ENCODE measurements at regions of chr20 and their contacts with region 1.

Region 1: GRCh38 chr20:36573103-36573794 is at the start of gene TGIF2:
- DNase-seq: peak; percentile 78
- H3K4me3 Mint-ChIP-seq: peak within 1 kb of the TSS; percentile 97
- H3K27ac Mint-ChIP-seq: peak within 1 kb of the TSS; percentile 99
- H3K4me1 Mint-ChIP-seq: peaks cover 34% of the 10 kb centered on the region
- H3K27me3 Mint-ChIP-seq: no peaks in the 10 kb centered on the region
- total RNA-seq, gene TGIF2: 44.3 and 50.6 TPM in 2 replicates

Region 2: GRCh38 chr20:36519944-36520343 is 53.3 kb before region 1 on chr20:
- intact Hi-C with region 1: loop called (anchors 2 kb)
- DNase-seq: no peak
- H3K4me3 Mint-ChIP-seq: no peak overlapping the region
- H3K27ac Mint-ChIP-seq: peak overlapping the region; percentile 87
- H3K4me1 Mint-ChIP-seq: peaks cover 20% of the 10 kb centered on the region
- H3K27me3 Mint-ChIP-seq: no peaks in the 10 kb centered on the region

Region 3: DNA sequence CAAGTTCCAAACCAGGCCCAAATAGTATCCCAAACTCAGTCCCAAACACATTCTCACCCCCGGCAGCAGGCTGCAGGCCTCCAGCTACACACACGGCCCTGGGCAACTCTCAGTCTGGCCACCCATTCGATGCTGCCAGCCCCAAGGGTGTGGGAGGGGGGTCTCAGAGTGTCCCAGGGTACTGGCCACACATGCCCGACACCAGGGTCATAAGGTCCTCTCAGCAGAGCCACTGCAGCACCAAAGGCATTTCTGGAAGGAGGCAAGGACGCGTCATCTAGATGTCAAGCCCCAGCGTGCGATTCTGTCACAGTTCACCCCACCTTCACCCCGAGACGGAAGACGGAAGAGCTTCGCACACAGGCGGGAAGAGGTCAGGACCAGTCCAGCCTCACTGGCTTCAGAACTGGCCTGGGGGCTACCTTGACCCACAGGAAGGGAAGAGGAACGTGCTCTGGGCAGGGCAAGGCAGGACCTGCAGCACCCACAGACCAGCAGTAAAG is 22.4 kb before region 1 on chr20:
- intact Hi-C with region 1: loop called (anchors 2 kb)
- DNase-seq: no peak
- H3K4me3 Mint-ChIP-seq: no peak overlapping the region
- H3K27ac Mint-ChIP-seq: no peak overlapping the region
- H3K4me1 Mint-ChIP-seq: peaks cover 2% of the 10 kb centered on the region
- H3K27me3 Mint-ChIP-seq: no peaks in the 10 kb centered on the region

Region 4: GRCh38 chr20:36591854-36592641 is 18.8 kb after region 1 on chr20:
- intact Hi-C with region 1: loop called (anchors 1 kb)
- DNase-seq: peak; percentile 44
- H3K4me3 Mint-ChIP-seq: peak overlapping the region; percentile 48
- H3K27ac Mint-ChIP-seq: peak overlapping the region; percentile 62
- H3K4me1 Mint-ChIP-seq: peaks cover 54% of the 10 kb centered on the region
- H3K27me3 Mint-ChIP-seq: no peaks in the 10 kb centered on the region

Region 5: DNA sequence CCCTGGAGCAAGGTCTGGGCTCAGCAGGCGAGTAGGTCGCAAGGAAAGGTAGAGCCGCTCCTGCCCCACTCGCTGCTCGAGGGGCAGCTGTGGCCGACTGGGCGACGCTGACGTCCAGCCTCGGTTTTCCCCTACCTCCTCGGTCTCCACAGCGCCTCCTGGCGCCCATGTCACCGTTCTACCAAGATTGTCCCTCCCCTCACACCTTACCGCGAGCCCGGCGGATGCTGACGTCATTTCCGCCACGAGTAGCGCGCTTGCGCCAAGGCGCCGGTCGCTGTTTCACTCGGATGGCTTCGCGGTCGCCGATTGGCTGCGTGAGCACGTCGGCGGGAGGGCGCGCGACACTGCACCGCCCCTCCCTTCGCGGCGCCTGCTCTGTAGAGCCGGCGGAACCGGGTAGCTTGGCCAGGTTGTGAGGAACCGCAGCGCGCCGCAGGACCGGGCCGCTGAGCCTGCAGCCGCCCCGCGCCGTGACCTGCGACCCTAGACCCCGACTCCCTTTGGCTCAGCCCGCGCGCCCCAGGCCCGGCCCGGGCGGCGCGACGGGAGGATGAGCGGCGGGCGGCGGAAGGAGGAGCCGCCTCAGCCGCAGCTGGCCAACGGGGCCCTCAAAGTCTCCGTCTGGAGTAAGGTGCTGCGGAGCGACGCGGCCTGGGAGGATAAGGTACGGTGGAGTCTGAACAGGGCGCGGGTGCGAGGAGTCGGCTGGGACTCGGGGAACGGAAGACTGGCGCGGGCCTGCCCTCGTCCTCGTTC is 32.3 kb after region 1 on chr20 and contains the start of gene RAB5IF:
- intact Hi-C with region 1: loop called (anchors 1 kb)
- DNase-seq: peak; percentile 100
- H3K4me3 Mint-ChIP-seq: peak within 1 kb of the TSS; percentile 99
- H3K27ac Mint-ChIP-seq: peak within 1 kb of the TSS; percentile 95
- H3K4me1 Mint-ChIP-seq: peaks cover 21% of the 10 kb centered on the region
- H3K27me3 Mint-ChIP-seq: no peaks in the 10 kb centered on the region
- total RNA-seq, gene RAB5IF: 94.5 and 99.0 TPM in 2 replicates

Region 6: GRCh38 chr20:36645998-36646397 is 72.7 kb after region 1 on chr20 and contains the start of gene SLA2:
- intact Hi-C with region 1: loop called (anchors 2 kb)
- DNase-seq: peak; percentile 60
- H3K4me3 Mint-ChIP-seq: peak within 1 kb of the TSS; percentile 96
- H3K27ac Mint-ChIP-seq: peak within 1 kb of the TSS; percentile 99
- H3K4me1 Mint-ChIP-seq: peaks cover 50% of the 10 kb centered on the region
- H3K27me3 Mint-ChIP-seq: no peaks in the 10 kb centered on the region
- total RNA-seq, gene SLA2: 54.9 and 56.5 TPM in 2 replicates

Region 7: GRCh38 chr20:36728986-36729385 is 155.7 kb after region 1 on chr20:
- intact Hi-C with region 1: loop called (anchors 1 kb)
- DNase-seq: no peak
- H3K4me3 Mint-ChIP-seq: no peak overlapping the region
- H3K27ac Mint-ChIP-seq: no peak overlapping the region
- H3K4me1 Mint-ChIP-seq: peaks cover 16% of the 10 kb centered on the region
- H3K27me3 Mint-ChIP-seq: no peaks in the 10 kb centered on the region